Naive thymus-derived CD4-positive, alpha-beta T cell (primary cell): ENCODE measurements at regions of chr22 and their contacts with region 1.

Region 1: GRCh38 chr22:20016734-20017621 is at the start of gene ARVCF:
- DNase-seq: peak; percentile 84 to 95 (median 91)
- ATAC-seq: peak; percentile 74
- H3K4me3 ChIP-seq: peak within 1 kb of the TSS; percentile 78
- H3K4me3 Mint-ChIP-seq: peak within 1 kb of the TSS; percentile 83 to 93 (median 90)
- H3K27ac ChIP-seq: peak within 1 kb of the TSS; percentile 66
- H3K27ac Mint-ChIP-seq: peak within 1 kb of the TSS in 7 of 9 donors; percentile 40 to 81 (median 67)
- H3K4me1 ChIP-seq: peaks cover 11 to 19% of the 10 kb centered on the region in 2 donors
- H3K4me1 Mint-ChIP-seq: peaks cover 3 to 34% (median 22%) of the 10 kb centered on the region in 7 donors
- H3K27me3 ChIP-seq: no peaks in the 10 kb centered on the region
- H3K27me3 Mint-ChIP-seq: peaks cover 0 to 40% (median 0%) of the 10 kb centered on the region in 5 donors
- total RNA-seq, gene ARVCF: 2.8 to 9.2 (median 5.8) TPM

Region 2: DNA sequence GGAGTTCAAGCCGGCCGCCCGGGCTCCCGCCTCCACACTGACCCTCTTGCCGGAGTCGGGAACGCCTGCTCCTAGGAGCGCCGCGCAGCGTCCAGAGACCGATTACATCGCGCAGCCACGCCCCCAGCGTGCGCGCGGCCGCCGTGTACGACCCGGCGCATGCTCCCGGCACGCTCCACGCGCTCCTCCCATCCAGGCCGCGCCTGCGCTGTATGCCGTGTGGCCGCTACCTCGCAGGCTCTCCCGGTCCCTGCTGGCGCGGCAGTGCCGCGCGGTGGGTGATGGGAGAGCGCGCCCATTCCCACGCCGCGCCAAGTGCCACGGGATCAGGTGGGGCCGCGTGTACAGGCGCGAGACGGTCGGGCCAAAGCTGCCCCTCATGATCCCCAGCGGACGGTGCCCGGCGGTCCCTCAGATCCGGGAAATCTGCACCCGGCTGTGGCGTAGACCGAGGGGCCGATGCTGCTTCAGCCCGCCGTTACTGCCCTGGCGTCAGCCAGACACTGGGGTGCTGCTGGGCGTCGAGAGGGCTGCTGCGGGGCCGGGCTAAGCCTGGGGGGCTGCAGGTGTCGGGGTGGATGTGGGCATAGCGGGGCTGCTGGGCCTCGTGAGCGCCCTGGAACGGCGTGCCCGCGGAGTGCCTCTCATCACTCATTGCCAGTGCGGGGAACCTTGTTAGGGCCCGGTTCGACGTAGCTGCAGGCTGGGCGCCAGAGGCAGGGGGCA is 162.0 kb before region 1 on chr22 and contains the starts of genes GNB1L and RTL10:
- CTCF ChIA-PET with region 1: no interaction called
- POLR2A ChIA-PET with region 1: interaction called, 3 read pairs
- intact Hi-C with region 1: loop called in 1 of 2 experiments (anchors 5 kb)
- DNase-seq: peak; percentile 91 to 97 (median 94)
- ATAC-seq: peak; percentile 97
- H3K4me3 ChIP-seq: peak within 1 kb of the TSS; percentile 64
- H3K4me3 Mint-ChIP-seq: peak within 1 kb of the TSS; percentile 94 to 99 (median 96)
- H3K27ac ChIP-seq: peak within 1 kb of the TSS; percentile 87
- H3K27ac Mint-ChIP-seq: peak within 1 kb of the TSS; percentile 90 to 96 (median 93)
- H3K4me1 ChIP-seq: peaks cover 19 to 21% of the 10 kb centered on the region in 2 donors
- H3K4me1 Mint-ChIP-seq: peaks cover 38 to 78% (median 65%) of the 10 kb centered on the region in 7 donors
- H3K27me3 ChIP-seq: no peaks in the 10 kb centered on the region
- H3K27me3 Mint-ChIP-seq: no peaks in the 10 kb centered on the region
- total RNA-seq, gene GNB1L: 4.2 to 14.1 (median 9.5) TPM
- total RNA-seq, gene RTL10: 18.2 to 36.8 (median 24.9) TPM

Region 3: GRCh38 chr22:19986410-19987341 is 30.3 kb before region 1 on chr22:
- CTCF ChIA-PET with region 1: no interaction called
- POLR2A ChIA-PET with region 1: interaction called, 3 read pairs
- intact Hi-C with region 1: loop called (anchors 1 to 2 kb)
- DNase-seq: peak; percentile 26 to 83 (median 47)
- ATAC-seq: peak; percentile 95
- H3K4me3 ChIP-seq: peak overlapping the region; percentile 46
- H3K4me3 Mint-ChIP-seq: peak overlapping the region; percentile 47 to 82 (median 68)
- H3K27ac ChIP-seq: peak overlapping the region; percentile 51
- H3K27ac Mint-ChIP-seq: no peak overlapping the region
- H3K4me1 ChIP-seq: no peaks in the 10 kb centered on the region
- H3K4me1 Mint-ChIP-seq: peaks cover 0 to 3% (median 2%) of the 10 kb centered on the region in 7 donors
- H3K27me3 ChIP-seq: no peaks in the 10 kb centered on the region
- H3K27me3 Mint-ChIP-seq: peaks cover 0 to 7% (median 0%) of the 10 kb centered on the region in 5 donors

Region 4: DNA sequence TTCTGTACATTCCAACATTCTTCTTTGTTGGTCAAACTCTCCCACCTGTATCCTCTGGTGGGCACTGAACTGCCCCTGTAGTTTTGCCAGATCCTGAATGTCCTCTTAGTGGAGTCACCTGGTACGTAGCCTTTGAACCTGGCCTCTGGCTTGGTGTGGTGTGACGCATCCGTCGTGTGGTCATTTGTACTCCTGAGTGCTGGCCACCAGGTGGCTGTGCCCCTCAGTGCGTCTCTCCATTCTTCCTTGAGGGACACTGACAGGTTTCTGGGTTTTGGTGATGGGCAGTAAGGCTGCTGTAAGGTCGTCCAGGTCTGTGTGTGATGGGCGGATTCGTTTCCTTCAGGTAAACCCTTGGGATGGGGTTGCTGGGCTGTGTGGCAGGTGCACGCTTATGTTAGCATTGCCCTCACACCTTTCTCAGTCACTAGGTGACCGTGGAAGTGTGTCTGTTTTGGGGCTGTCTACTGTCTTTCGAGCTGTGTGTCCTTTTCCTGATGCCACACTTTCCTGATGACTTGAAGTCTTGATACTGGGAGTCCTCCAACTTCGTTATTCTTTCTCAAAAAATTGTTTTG is 85.3 kb after region 1 on chr22:
- CTCF ChIA-PET with region 1: interaction called, 3 read pairs
- POLR2A ChIA-PET with region 1: interaction called, 11 read pairs
- intact Hi-C with region 1: no loop called
- DNase-seq: no peak
- ATAC-seq: no peak
- H3K4me3 ChIP-seq: no peak overlapping the region
- H3K4me3 Mint-ChIP-seq: peak overlapping the region in 2 of 10 donors; percentile 29 to 39
- H3K27ac ChIP-seq: no peak overlapping the region
- H3K27ac Mint-ChIP-seq: peak overlapping the region; percentile 59 to 97 (median 85)
- H3K4me1 ChIP-seq: peaks cover 24 to 29% of the 10 kb centered on the region in 2 donors
- H3K4me1 Mint-ChIP-seq: peaks cover 22 to 52% (median 46%) of the 10 kb centered on the region in 7 donors
- H3K27me3 ChIP-seq: no peaks in the 10 kb centered on the region
- H3K27me3 Mint-ChIP-seq: no peaks in the 10 kb centered on the region

Region 5: GRCh38 chr22:20298803-20299735 is 282.1 kb after region 1 on chr22:
- CTCF ChIA-PET with region 1: no interaction called
- POLR2A ChIA-PET with region 1: no interaction called
- intact Hi-C with region 1: loop called in 1 of 2 experiments (anchors 1 kb)
- DNase-seq: peak; percentile 80 to 93 (median 92)
- ATAC-seq: peak; percentile 96
- H3K4me3 ChIP-seq: peak overlapping the region; percentile 52
- H3K4me3 Mint-ChIP-seq: peak overlapping the region; percentile 72 to 89 (median 82)
- H3K27ac ChIP-seq: peak overlapping the region; percentile 60
- H3K27ac Mint-ChIP-seq: peak overlapping the region in 6 of 9 donors; percentile 36 to 79 (median 62)
- H3K4me1 ChIP-seq: peaks cover 0 to 3% of the 10 kb centered on the region in 2 donors
- H3K4me1 Mint-ChIP-seq: peaks cover 4 to 11% (median 9%) of the 10 kb centered on the region in 7 donors
- H3K27me3 ChIP-seq: no peaks in the 10 kb centered on the region
- H3K27me3 Mint-ChIP-seq: peaks cover 0 to 27% (median 4%) of the 10 kb centered on the region in 5 donors